Testis (tissue), 5 donors: ENCODE measurements at regions of chr20 and their contacts with region 1.

Region 1: DNA sequence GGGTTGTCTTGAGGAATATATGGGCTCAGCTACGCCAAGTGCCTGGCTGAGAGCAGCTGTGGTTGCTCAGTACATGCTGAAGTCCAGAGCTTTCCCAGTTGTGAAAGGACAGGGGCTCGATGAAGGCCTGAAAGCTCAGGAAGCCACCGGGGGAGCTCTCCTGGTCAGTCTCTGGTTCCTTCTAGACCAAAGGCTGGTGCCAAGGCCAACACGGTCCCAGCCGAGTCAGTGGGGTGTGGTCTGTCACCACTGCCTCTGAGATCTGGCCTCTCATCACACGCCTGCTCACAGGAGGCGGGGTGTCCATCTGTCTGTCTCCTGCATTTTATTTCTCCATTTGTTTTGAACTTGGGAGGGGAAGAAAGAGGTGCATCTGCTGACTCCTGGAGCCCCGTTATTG is 4.9 kb upstream of the FAM83C start:
- DNase-seq: no peak
- H3K4me3 ChIP-seq: no peak overlapping the region
- H3K27ac ChIP-seq: no peak overlapping the region
- H3K4me1 ChIP-seq: no peaks in the 10 kb centered on the region
- H3K27me3 ChIP-seq: no peaks in the 10 kb centered on the region
- CTCF ChIP-seq: no peak
- POLR2A ChIP-seq: no peak

Region 2: GRCh38 chr20:34493646-34494045 is 803.5 kb before region 1 on chr20:
- intact Hi-C with region 1: no loop called
- DNase-seq: no peak
- H3K4me3 ChIP-seq: no peak overlapping the region
- H3K27ac ChIP-seq: no peak overlapping the region
- H3K4me1 ChIP-seq: no peaks in the 10 kb centered on the region
- H3K27me3 ChIP-seq: no peaks in the 10 kb centered on the region
- CTCF ChIP-seq: no peak
- POLR2A ChIP-seq: no peak

Region 3: GRCh38 chr20:35226775-35227681 is 70.1 kb before region 1 on chr20:
- intact Hi-C with region 1: no loop called
- DNase-seq: peak; percentile 52
- H3K4me3 ChIP-seq: no peak overlapping the region
- H3K27ac ChIP-seq: no peak overlapping the region
- H3K4me1 ChIP-seq: no peaks in the 10 kb centered on the region
- H3K27me3 ChIP-seq: no peaks in the 10 kb centered on the region
- CTCF ChIP-seq: no peak
- POLR2A ChIP-seq: no peak

Region 4: GRCh38 chr20:35443003-35443402 is 145.8 kb after region 1 on chr20:
- intact Hi-C with region 1: loop called (anchors 5 kb)
- DNase-seq: no peak
- H3K4me3 ChIP-seq: no peak overlapping the region
- H3K27ac ChIP-seq: no peak overlapping the region
- H3K4me1 ChIP-seq: peaks cover 2% of the 10 kb centered on the region
- H3K27me3 ChIP-seq: no peaks in the 10 kb centered on the region
- CTCF ChIP-seq: no peak
- POLR2A ChIP-seq: no peak

Region 5: GRCh38 chr20:35478804-35479472 is 181.8 kb after region 1 on chr20:
- intact Hi-C with region 1: no loop called
- DNase-seq: no peak
- H3K4me3 ChIP-seq: no peak overlapping the region
- H3K27ac ChIP-seq: no peak overlapping the region
- H3K4me1 ChIP-seq: no peaks in the 10 kb centered on the region
- H3K27me3 ChIP-seq: no peaks in the 10 kb centered on the region
- CTCF ChIP-seq: peak in 1 of 3 experiments; percentile 8
- POLR2A ChIP-seq: no peak